ENCODE measurements at regions of chr1 and their contacts with region 1.

Region 1: GRCh38 chr1:155591770-155592169 is 18.2 kb upstream of the MSTO1 start:
- DNase-seq: peak in 2 of 5 donors; percentile 28 to 32
- ATAC-seq: peak; percentile 43 to 74 (median 68)
- H3K4me3 ChIP-seq: no peak overlapping the region
- H3K27ac ChIP-seq: no peak overlapping the region
- H3K4me1 ChIP-seq: peaks cover 0 to 5% (median 0%) of the 10 kb centered on the region in 12 donors
- H3K27me3 ChIP-seq: no peaks in the 10 kb centered on the region
- CTCF ChIP-seq: peak; percentile 38 to 68 (median 56)
- POLR2A ChIP-seq: no peak

Region 2: DNA sequence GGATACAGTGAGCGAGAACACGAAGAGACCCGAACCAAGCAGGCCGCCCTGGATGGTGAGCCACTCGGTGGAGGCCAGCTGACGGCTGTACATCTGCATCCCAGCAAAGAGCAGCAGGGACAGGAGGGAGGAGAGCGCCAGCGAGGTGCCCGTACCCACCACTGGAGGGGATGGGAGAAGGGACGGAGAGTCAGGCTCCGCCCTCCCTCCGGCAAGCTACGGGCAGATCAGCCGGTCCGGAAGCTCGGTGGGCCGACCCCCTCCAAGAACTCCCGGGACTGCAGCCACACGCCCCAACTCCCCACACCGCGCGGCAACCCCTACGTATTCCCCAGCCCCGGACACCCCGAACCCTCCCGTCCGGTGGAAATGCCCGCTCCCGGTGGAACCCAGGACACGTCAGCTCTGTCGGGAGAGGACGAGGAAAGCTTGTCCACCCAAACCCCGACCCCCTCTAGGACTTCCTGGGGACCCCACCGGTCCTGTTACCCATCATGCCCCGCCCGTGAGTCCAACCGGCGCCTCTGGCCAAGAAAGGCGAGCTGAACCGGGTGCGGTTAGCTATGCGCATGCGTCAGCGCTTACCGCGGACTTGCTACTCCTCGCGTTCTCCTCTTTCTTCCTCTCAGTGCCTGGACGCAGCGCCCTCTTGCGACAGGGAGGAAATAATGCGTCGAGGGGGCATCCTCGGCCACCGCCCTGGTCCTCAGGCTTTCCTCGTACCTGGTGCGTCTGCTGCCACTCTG is 418.9 kb before region 1 on chr1 and contains the start of gene KRTCAP2:
- intact Hi-C with region 1: loop called in 1 of 10 experiments (anchors 10 kb)
- DNase-seq: peak; percentile 95 to 98 (median 97)
- ATAC-seq: peak; percentile 79 to 92 (median 90)
- H3K4me3 ChIP-seq: peak within 1 kb of the TSS; percentile 48 to 98 (median 82)
- H3K27ac ChIP-seq: peak within 1 kb of the TSS; percentile 83 to 98 (median 94)
- H3K4me1 ChIP-seq: peaks cover 0 to 50% (median 21%) of the 10 kb centered on the region in 12 donors
- H3K27me3 ChIP-seq: peaks cover 0 to 28% (median 14%) of the 10 kb centered on the region in 9 donors
- CTCF ChIP-seq: peak; percentile 86 to 97 (median 93)
- POLR2A ChIP-seq: peak in 1 of 2 donors; percentile 74
- total RNA-seq, gene KRTCAP2: 106 to 199 (median 123) TPM

Region 3: GRCh38 chr1:155250633-155251449 is 340.9 kb before region 1 on chr1:
- intact Hi-C with region 1: loop called (anchors 2 to 10 kb)
- DNase-seq: peak; percentile 92 to 96 (median 93)
- ATAC-seq: peak; percentile 79 to 85 (median 84)
- H3K4me3 ChIP-seq: peak overlapping the region in 9 of 12 donors; percentile 17 to 60 (median 36)
- H3K27ac ChIP-seq: peak overlapping the region in 8 of 12 donors; percentile 29 to 57 (median 46)
- H3K4me1 ChIP-seq: peaks cover 7 to 38% (median 27%) of the 10 kb centered on the region in 12 donors
- H3K27me3 ChIP-seq: no peaks in the 10 kb centered on the region
- CTCF ChIP-seq: peak; percentile 99 to 100 (median 100)
- POLR2A ChIP-seq: no peak

Region 4: GRCh38 chr1:155339515-155340097 is 252.2 kb before region 1 on chr1:
- intact Hi-C with region 1: loop called in 1 of 10 experiments (anchors 10 kb)
- DNase-seq: no peak
- ATAC-seq: no peak
- H3K4me3 ChIP-seq: no peak overlapping the region
- H3K27ac ChIP-seq: no peak overlapping the region
- H3K4me1 ChIP-seq: no peaks in the 10 kb centered on the region
- H3K27me3 ChIP-seq: no peaks in the 10 kb centered on the region
- CTCF ChIP-seq: no peak
- POLR2A ChIP-seq: no peak

Region 5: GRCh38 chr1:155454096-155454495 is 137.7 kb before region 1 on chr1:
- intact Hi-C with region 1: loop called in 1 of 10 experiments (anchors 10 kb)
- DNase-seq: no peak
- ATAC-seq: no peak
- H3K4me3 ChIP-seq: no peak overlapping the region
- H3K27ac ChIP-seq: no peak overlapping the region
- H3K4me1 ChIP-seq: peaks cover 0 to 19% (median 11%) of the 10 kb centered on the region in 12 donors
- H3K27me3 ChIP-seq: no peaks in the 10 kb centered on the region
- CTCF ChIP-seq: no peak
- POLR2A ChIP-seq: no peak

Region 6: DNA sequence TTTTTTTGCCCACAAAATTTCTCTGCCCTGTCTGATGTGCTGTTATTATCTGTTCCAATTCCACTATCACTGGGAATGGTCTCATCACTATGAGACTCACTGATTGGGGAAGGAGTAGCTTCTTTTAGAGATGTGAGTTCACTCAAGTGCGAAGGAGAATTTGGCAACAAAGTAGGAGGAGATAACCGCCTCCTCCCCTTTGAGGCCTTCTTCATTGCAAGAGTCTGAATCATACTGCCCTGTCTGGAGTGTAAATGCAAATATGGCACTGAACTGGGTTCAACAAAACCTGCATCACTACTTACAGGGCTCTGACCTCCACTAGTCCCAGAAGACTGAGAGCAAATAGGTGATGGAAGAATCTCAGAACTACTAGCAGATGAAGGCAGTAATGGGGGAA is 112.6 kb before region 1 on chr1:
- intact Hi-C with region 1: no loop called
- DNase-seq: no peak
- ATAC-seq: no peak
- H3K4me3 ChIP-seq: no peak overlapping the region
- H3K27ac ChIP-seq: no peak overlapping the region
- H3K4me1 ChIP-seq: peaks cover 0 to 12% (median 0%) of the 10 kb centered on the region in 12 donors
- H3K27me3 ChIP-seq: no peaks in the 10 kb centered on the region
- CTCF ChIP-seq: no peak
- POLR2A ChIP-seq: no peak

Region 7: GRCh38 chr1:155548706-155549105 is 43.1 kb before region 1 on chr1:
- intact Hi-C with region 1: no loop called
- DNase-seq: no peak
- ATAC-seq: no peak
- H3K4me3 ChIP-seq: no peak overlapping the region
- H3K27ac ChIP-seq: no peak overlapping the region
- H3K4me1 ChIP-seq: peaks cover 0 to 31% (median 20%) of the 10 kb centered on the region in 12 donors
- H3K27me3 ChIP-seq: no peaks in the 10 kb centered on the region
- CTCF ChIP-seq: no peak
- POLR2A ChIP-seq: no peak

Region 8: GRCh38 chr1:155648551-155649147 is 56.9 kb after region 1 on chr1:
- intact Hi-C with region 1: loop called in 2 of 10 experiments (anchors 10 kb)
- DNase-seq: no peak
- ATAC-seq: peak; percentile 50 to 93 (median 84)
- H3K4me3 ChIP-seq: peak overlapping the region in 3 of 12 donors; percentile 5 to 22 (median 18)
- H3K27ac ChIP-seq: peak overlapping the region in 1 of 12 donors; percentile 53
- H3K4me1 ChIP-seq: peaks cover 0 to 32% (median 1%) of the 10 kb centered on the region in 12 donors
- H3K27me3 ChIP-seq: no peaks in the 10 kb centered on the region
- CTCF ChIP-seq: peak in 10 of 12 donors; percentile 10 to 52 (median 33)
- POLR2A ChIP-seq: no peak

Measured in heart left ventricle (tissue), 16 donors.